ENCODE measurements at regions of chr9 and their contacts with region 1.

Region 1: GRCh38 chr9:129796029-129796910 is 6.7 kb upstream of the TOR1B start:
- DNase-seq: peak in 1 of 4 experiments; percentile 9
- ATAC-seq: no peak
- H3K4me3 ChIP-seq: no peak overlapping the region
- H3K27ac ChIP-seq: no peak overlapping the region
- H3K4me1 ChIP-seq: no peaks in the 10 kb centered on the region
- H3K27me3 ChIP-seq: peaks cover 35 to 43% of the 10 kb centered on the region in 2 experiments
- CTCF ChIP-seq: no peak
- EP300 ChIP-seq: no peak
- POLR2A ChIP-seq: no peak
- RAD21 ChIP-seq: no peak

Region 2: GRCh38 chr9:129166623-129167557 is 629.4 kb before region 1 on chr9:
- CTCF ChIA-PET with region 1: no interaction called
- POLR2A ChIA-PET with region 1: no interaction called
- in situ Hi-C with region 1: loop called (anchors 10 kb)
- intact Hi-C with region 1: no loop called
- DNase-seq: peak; percentile 82 to 92 (median 90)
- ATAC-seq: peak; percentile 87
- H3K4me3 ChIP-seq: peak overlapping the region; percentile 34
- H3K27ac ChIP-seq: peak overlapping the region; percentile 50
- H3K4me1 ChIP-seq: peaks cover 29 to 33% of the 10 kb centered on the region in 2 experiments
- H3K27me3 ChIP-seq: peaks cover 0 to 1% of the 10 kb centered on the region in 2 experiments; a peak in 1 of 5 replicates
- CTCF ChIP-seq: no peak
- EP300 ChIP-seq: no peak
- POLR2A ChIP-seq: no peak
- RAD21 ChIP-seq: no peak

Region 3: GRCh38 chr9:130940693-130941576 is 1144.7 kb after region 1 on chr9:
- CTCF ChIA-PET with region 1: no interaction called
- POLR2A ChIA-PET with region 1: no interaction called
- in situ Hi-C with region 1: no loop called
- intact Hi-C with region 1: no loop called
- DNase-seq: peak; percentile 63 to 100 (median 96)
- ATAC-seq: peak; percentile 89
- H3K4me3 ChIP-seq: no peak overlapping the region
- H3K27ac ChIP-seq: no peak overlapping the region
- H3K4me1 ChIP-seq: peaks cover 0 to 42% of the 10 kb centered on the region in 2 experiments; a peak in 3 of 5 replicates
- H3K27me3 ChIP-seq: peaks cover 55 to 84% of the 10 kb centered on the region in 2 experiments
- CTCF ChIP-seq: no peak
- EP300 ChIP-seq: no peak
- POLR2A ChIP-seq: no peak
- RAD21 ChIP-seq: no peak

Measured in K562 (cell line).